Breast epithelium (tissue), 4 donors: ENCODE measurements at regions of chr4 and their contacts with region 1.

Region 1: GRCh38 chr4:4575273-4576211 is 33.7 kb upstream of the STX18 start:
- DNase-seq: no peak
- H3K4me3 ChIP-seq: peak overlapping the region; percentile 66 to 91 (median 73)
- H3K27ac ChIP-seq: peak overlapping the region; percentile 70 to 82
- H3K4me1 ChIP-seq: no peaks in the 10 kb centered on the region
- H3K27me3 ChIP-seq: no peaks in the 10 kb centered on the region
- CTCF ChIP-seq: peak in 1 of 3 donors; percentile 51
- POLR2A ChIP-seq: no peak

Region 2: DNA sequence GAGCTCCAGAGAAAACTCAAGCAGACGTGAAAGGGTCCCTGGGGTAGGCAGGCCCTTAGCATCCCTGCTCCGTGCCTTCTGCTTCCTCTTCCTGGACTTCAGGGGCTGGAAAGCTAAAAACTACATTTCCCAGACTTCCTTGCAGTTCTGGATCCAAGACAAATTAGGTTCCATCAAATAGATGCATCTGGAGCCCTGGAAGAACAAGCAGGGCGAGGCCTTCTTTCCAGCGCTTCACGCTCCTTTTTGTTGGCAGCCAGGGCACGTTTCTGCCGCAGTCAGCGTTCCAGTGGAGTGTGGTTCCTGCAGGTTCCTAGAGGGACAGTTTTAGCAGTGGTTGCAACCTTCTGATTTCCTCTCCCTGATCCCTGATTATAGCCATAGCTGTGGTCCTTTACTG is 230.3 kb after region 1 on chr4:
- intact Hi-C with region 1: no loop called
- DNase-seq: no peak
- H3K4me3 ChIP-seq: no peak overlapping the region
- H3K27ac ChIP-seq: no peak overlapping the region
- H3K4me1 ChIP-seq: no peaks in the 10 kb centered on the region
- H3K27me3 ChIP-seq: no peaks in the 10 kb centered on the region
- CTCF ChIP-seq: no peak
- POLR2A ChIP-seq: no peak

Region 3: GRCh38 chr4:5774416-5775036 is 1199.0 kb after region 1 on chr4:
- intact Hi-C with region 1: loop called (anchors 5 kb)
- DNase-seq: no peak
- H3K4me3 ChIP-seq: no peak overlapping the region
- H3K27ac ChIP-seq: no peak overlapping the region
- H3K4me1 ChIP-seq: no peaks in the 10 kb centered on the region
- H3K27me3 ChIP-seq: no peaks in the 10 kb centered on the region
- CTCF ChIP-seq: no peak
- POLR2A ChIP-seq: no peak

Region 4: DNA sequence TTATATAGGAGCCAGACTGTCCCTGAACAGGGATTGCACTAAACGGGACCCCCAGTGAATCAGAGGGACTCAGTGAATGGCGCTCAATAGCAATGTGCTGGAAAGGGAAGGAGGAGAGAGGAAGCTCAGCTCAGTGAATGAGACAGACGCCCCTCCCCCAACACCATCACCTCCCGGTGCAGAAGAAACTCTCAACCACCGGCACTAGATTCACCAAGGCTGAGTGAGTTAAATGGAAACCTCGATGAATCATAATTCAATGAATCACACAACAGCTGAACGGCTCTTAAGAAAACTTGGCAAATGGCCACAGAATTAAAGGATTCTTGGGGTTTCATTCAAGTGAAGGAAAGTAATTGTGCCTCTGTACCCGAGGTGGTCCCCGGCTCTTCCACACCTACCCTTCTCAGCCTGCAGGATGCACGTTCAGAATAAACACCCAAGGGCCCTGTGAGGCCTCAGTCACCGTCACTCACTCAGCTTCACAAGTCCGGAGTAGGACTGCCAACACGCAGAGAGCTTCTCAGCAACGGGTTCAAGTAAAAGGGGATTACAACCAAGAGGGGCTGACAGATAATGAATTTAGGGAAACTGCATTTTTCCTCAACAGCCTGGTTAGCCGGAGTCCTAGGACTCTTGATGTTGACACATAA is 1288.0 kb after region 1 on chr4:
- intact Hi-C with region 1: no loop called
- DNase-seq: no peak
- H3K4me3 ChIP-seq: no peak overlapping the region
- H3K27ac ChIP-seq: no peak overlapping the region
- H3K4me1 ChIP-seq: no peaks in the 10 kb centered on the region
- H3K27me3 ChIP-seq: peaks cover 0 to 14% of the 10 kb centered on the region in 2 donors
- CTCF ChIP-seq: no peak
- POLR2A ChIP-seq: no peak